CD4-positive, alpha-beta memory T cell (primary cell): ENCODE measurements at regions of chr17 and their contacts with region 1.

Region 1: DNA sequence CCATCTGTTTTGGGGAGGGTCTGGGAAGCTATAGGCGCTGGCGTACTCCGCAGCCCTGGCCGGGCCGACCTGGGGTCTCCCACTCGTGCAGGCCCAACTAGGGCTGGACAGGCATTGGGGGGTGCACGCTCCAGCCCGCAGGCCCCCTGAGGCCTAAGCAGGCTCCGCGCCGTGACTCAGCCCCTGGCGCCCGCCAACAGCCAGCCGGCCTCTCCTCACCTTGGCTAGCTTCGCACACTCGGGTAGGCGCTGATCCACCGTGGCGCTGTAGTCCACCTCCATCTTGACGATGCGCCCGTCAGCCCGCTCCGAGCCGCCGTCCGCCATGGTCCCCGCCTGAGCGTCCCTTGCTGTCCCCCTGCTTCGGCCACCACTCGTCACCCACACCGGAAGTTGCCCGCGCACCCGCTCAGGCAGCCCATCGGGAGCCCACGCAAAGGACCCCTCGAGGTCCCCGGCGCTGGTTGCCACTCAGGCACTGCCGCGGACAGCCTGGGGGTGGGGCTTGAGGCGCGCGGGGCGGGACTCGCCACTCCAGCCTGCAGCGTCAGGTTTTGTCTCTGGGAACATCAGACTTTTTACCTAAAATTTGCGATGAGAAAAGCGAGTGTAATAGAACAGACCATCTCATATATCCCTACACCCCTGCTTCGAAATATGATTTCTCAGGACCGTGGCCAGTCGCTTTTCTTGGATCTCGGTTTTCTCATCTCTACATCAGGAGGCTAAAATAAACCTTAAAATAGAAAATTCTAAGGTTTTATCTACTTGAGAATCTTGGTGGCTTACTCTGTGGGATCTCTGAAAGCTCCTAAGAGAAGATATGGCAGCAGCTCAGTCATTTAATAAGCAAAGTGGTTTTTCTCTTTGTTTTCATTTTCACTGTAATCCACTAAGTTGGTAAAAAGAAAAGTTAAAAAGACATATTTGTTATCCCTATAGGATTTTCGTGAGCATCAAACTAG is at the start of gene PSMD12:
- DNase-seq: peak; percentile 90 to 95 (median 92)
- H3K4me3 ChIP-seq: peak within 1 kb of the TSS; percentile 88 to 98
- H3K4me3 Mint-ChIP-seq: peak within 1 kb of the TSS; percentile 90 to 99 (median 98)
- H3K27ac ChIP-seq: peak within 1 kb of the TSS; percentile 94
- H3K27ac Mint-ChIP-seq: peak within 1 kb of the TSS; percentile 90 to 99 (median 98)
- H3K4me1 ChIP-seq: peaks cover 45% of the 10 kb centered on the region
- H3K4me1 Mint-ChIP-seq: peaks cover 27 to 51% (median 42%) of the 10 kb centered on the region in 4 donors
- H3K27me3 ChIP-seq: no peaks in the 10 kb centered on the region
- H3K27me3 Mint-ChIP-seq: no peaks in the 10 kb centered on the region
- total RNA-seq, gene PSMD12: 46.9 to 48.8 TPM

Region 2: GRCh38 chr17:67717624-67718329 is 351.3 kb after region 1 on chr17 and contains the start of gene NOL11:
- CTCF ChIA-PET with region 1: interaction called, 4 read pairs
- POLR2A ChIA-PET with region 1: interaction called, 8 read pairs
- intact Hi-C with region 1: loop called (anchors 1 kb)
- DNase-seq: peak; percentile 99 to 100 (median 99)
- H3K4me3 ChIP-seq: peak within 1 kb of the TSS; percentile 89 to 100
- H3K4me3 Mint-ChIP-seq: peak within 1 kb of the TSS; percentile 98 to 100 (median 100)
- H3K27ac ChIP-seq: peak within 1 kb of the TSS; percentile 94
- H3K27ac Mint-ChIP-seq: peak within 1 kb of the TSS; percentile 97 to 100 (median 99)
- H3K4me1 ChIP-seq: peaks cover 28% of the 10 kb centered on the region
- H3K4me1 Mint-ChIP-seq: peaks cover 10 to 33% (median 19%) of the 10 kb centered on the region in 4 donors
- H3K27me3 ChIP-seq: no peaks in the 10 kb centered on the region
- H3K27me3 Mint-ChIP-seq: peaks cover 0 to 2% of the 10 kb centered on the region in 2 donors
- total RNA-seq, gene NOL11: 56.6 to 57.1 TPM